ENCODE measurements at regions of chr13 and their contacts with region 1.

Region 1: DNA sequence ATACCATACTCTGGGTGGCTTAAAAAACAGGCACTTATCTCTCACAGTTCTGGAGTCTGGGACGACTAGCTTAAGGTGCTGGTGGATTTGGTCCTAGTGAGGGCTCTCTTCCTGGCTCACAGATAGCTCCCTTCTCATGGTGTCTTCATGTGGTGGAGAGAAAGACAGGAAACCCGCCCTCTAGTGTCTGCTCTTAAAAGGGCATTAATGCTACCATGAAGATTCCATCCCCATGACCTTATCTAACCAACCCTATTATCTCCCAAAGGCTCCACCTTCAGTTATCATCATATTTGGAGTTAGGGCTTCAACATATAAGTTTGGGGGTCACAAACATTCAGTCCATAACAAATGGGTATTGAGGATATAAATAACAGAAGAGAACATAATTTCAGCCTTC is 139.4 kb downstream of the HS6ST3 start:
- DNase-seq: peak; percentile 48
- ATAC-seq: peak; percentile 91
- H3K4me3 ChIP-seq: no peak overlapping the region
- H3K27ac ChIP-seq: no peak overlapping the region
- H3K4me1 ChIP-seq: no peaks in the 10 kb centered on the region
- H3K27me3 ChIP-seq: no peaks in the 10 kb centered on the region
- CTCF ChIP-seq: peak in 2 of 3 experiments; percentile 62 to 70; a peak in 5 of 6 replicates
- POLR2A ChIP-seq: no peak
- RAD21 ChIP-seq: peak; percentile 32

Region 2: DNA sequence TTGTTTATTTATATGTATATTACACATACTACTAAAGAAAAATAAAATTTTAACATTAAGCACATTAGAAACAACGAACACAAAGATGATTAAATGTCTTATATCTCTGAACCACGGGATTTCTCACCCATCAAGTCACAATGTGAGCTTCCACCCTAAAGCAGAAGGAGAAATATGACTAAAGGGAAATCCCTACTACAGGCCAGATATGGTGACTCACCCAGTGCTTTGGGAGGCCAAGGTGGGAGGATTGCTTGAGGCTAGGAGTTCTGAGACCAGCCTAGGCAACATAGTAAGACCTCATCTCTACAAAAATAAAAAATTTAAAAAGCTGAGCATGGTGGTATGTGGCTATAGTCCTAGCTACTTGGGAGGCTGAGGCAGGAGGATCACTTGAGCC is 1774.5 kb before region 1 on chr13:
- CTCF ChIA-PET with region 1: no interaction called
- POLR2A ChIA-PET with region 1: no interaction called
- RAD21 ChIA-PET with region 1: no interaction called
- intact Hi-C with region 1: no loop called
- DNase-seq: no peak
- ATAC-seq: no peak
- H3K4me3 ChIP-seq: no peak overlapping the region
- H3K27ac ChIP-seq: no peak overlapping the region
- H3K4me1 ChIP-seq: no peaks in the 10 kb centered on the region
- H3K27me3 ChIP-seq: no peaks in the 10 kb centered on the region
- CTCF ChIP-seq: no peak
- POLR2A ChIP-seq: no peak
- RAD21 ChIP-seq: no peak

Region 3: DNA sequence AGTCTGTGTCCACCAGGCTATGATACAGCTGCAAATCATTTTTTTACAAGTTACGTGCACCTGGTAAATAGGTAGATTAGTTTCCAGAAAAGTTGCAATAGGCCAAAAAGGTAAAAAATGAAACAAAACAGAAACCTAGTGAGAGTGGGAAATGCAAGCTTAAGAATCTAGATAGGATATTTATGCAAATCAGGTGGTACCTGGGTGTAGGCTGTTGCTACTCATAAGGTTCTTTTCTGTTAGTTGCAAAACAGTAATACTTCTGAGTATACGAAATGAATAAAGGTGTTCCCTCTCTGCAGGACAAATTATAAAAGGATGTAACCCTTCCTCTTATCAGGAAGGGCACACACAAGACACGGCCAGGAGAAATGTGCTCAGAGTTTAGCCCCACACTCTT is 274.1 kb before region 1 on chr13:
- CTCF ChIA-PET with region 1: no interaction called
- POLR2A ChIA-PET with region 1: no interaction called
- RAD21 ChIA-PET with region 1: no interaction called
- intact Hi-C with region 1: no loop called
- DNase-seq: no peak
- ATAC-seq: no peak
- H3K4me3 ChIP-seq: no peak overlapping the region
- H3K27ac ChIP-seq: no peak overlapping the region
- H3K4me1 ChIP-seq: no peaks in the 10 kb centered on the region
- H3K27me3 ChIP-seq: no peaks in the 10 kb centered on the region
- CTCF ChIP-seq: no peak
- POLR2A ChIP-seq: no peak
- RAD21 ChIP-seq: no peak

Region 4: GRCh38 chr13:96020155-96020575 is 209.2 kb before region 1 on chr13:
- CTCF ChIA-PET with region 1: interaction called, 19 read pairs
- POLR2A ChIA-PET with region 1: no interaction called
- RAD21 ChIA-PET with region 1: interaction called, 3 to 4 read pairs
- intact Hi-C with region 1: loop called (anchors 1 kb)
- DNase-seq: peak; percentile 56
- ATAC-seq: peak; percentile 95
- H3K4me3 ChIP-seq: no peak overlapping the region
- H3K27ac ChIP-seq: no peak overlapping the region
- H3K4me1 ChIP-seq: no peaks in the 10 kb centered on the region
- H3K27me3 ChIP-seq: no peaks in the 10 kb centered on the region
- CTCF ChIP-seq: peak; percentile 57 to 70 (median 58); a peak in 5 of 6 replicates
- POLR2A ChIP-seq: no peak
- RAD21 ChIP-seq: peak; percentile 78

Region 5: DNA sequence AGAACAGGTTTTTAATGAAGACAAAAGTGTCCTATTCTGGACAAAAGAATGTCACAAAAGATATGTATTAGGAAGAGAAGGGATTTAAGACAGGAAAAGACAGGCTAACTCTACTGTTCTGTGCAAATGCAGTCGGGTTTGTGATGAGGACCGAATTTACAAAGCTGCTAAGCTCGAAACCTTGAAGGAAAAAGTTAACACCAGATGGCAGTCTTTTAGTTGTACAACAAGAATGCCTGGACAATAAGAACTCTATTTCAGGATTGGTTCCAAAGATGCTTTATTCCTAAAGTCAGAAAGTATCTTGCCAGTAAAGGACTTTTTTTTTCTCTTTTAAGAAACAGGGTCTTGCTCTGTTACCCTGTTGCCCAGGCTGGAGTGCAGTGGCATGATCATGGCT is 88.3 kb before region 1 on chr13:
- CTCF ChIA-PET with region 1: interaction called, 11 read pairs
- POLR2A ChIA-PET with region 1: no interaction called
- RAD21 ChIA-PET with region 1: no interaction called
- intact Hi-C with region 1: no loop called
- DNase-seq: no peak
- ATAC-seq: peak; percentile 42; the same call in 1 of the 2 replicates
- H3K4me3 ChIP-seq: no peak overlapping the region
- H3K27ac ChIP-seq: no peak overlapping the region
- H3K4me1 ChIP-seq: no peaks in the 10 kb centered on the region
- H3K27me3 ChIP-seq: peaks cover 5% of the 10 kb centered on the region; the same call in 1 of the 2 replicates
- CTCF ChIP-seq: peak in 2 of 3 experiments; percentile 28 to 30; a peak in 2 of 6 replicates
- POLR2A ChIP-seq: no peak
- RAD21 ChIP-seq: peak; percentile 38; the same call in 1 of the 2 replicates

Measured in HCT116 (cell line).